A549 (cell line): ENCODE measurements at regions of chr20 and their contacts with region 1.

Region 1: GRCh38 chr20:1185790-1186334 is 1.1 kb upstream of the TMEM74B start:
- DNase-seq: peak; percentile 78 to 81
- ATAC-seq: peak; percentile 72 to 87
- H3K4me3 ChIP-seq: peak overlapping the region; percentile 94
- H3K27ac ChIP-seq: peak overlapping the region; percentile 76 to 90
- H3K4me1 ChIP-seq: peaks cover 16% of the 10 kb centered on the region
- CTCF ChIP-seq: peak; percentile 79
- EP300 ChIP-seq: no peak
- POLR2A ChIP-seq: no peak
- RAD21 ChIP-seq: peak; percentile 64 to 83

Region 2: GRCh38 chr20:1171461-1172093 is 14.3 kb before region 1 on chr20:
- CTCF ChIA-PET with region 1: interaction called, 91 read pairs
- POLR2A ChIA-PET with region 1: no interaction called
- DNase-seq: peak in 1 of 2 experiments; percentile 24
- ATAC-seq: peak in 1 of 2 experiments; percentile 25; a peak in 3 of 6 replicates
- H3K4me3 ChIP-seq: no peak overlapping the region
- H3K27ac ChIP-seq: no peak overlapping the region
- H3K4me1 ChIP-seq: no peaks in the 10 kb centered on the region
- CTCF ChIP-seq: no peak
- EP300 ChIP-seq: no peak
- POLR2A ChIP-seq: no peak
- RAD21 ChIP-seq: no peak

Region 3: DNA sequence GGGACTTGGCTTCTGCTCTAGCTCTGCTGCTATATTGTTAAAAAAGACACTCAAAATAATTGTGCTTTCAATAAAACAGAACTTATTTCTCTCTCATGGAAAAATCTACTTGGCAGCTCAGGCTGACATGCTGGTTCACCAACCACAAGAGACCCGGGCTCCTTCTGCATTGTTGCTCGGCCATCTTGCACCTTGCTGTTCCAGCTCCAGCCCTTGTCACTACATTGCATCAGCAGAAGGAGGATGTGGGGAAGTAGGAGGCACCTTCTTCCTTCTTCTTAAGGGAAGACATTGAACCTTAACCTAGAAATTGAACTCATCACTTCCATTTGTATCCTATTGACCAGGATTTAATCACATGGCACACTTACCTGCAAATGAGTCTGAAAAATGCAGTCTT is 10.8 kb after region 1 on chr20:
- CTCF ChIA-PET with region 1: interaction called, 11 read pairs
- POLR2A ChIA-PET with region 1: no interaction called
- DNase-seq: no peak
- ATAC-seq: no peak
- H3K4me3 ChIP-seq: no peak overlapping the region
- H3K27ac ChIP-seq: no peak overlapping the region
- H3K4me1 ChIP-seq: no peaks in the 10 kb centered on the region
- CTCF ChIP-seq: no peak
- EP300 ChIP-seq: no peak
- POLR2A ChIP-seq: no peak
- RAD21 ChIP-seq: no peak

Region 4: DNA sequence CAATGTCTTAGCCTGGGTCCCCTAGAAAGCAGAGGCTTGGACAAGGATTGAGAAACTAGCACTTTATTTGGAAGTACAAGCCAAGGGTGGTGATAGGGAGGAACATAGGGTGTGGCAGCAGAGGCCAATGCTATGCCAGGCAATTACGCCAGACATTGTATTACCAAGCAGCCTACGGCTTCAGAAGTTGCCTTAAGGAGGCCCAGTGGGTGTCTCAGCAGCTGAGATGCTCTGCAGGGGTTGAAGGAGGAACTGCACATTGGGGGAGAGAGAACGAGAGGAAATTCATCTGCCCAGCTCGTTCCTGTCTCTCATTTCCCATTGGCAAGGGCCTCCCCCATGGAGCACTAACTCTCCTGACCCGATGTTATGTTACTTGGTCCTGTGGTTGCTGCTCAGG is 18.3 kb after region 1 on chr20:
- CTCF ChIA-PET with region 1: interaction called, 21 read pairs
- POLR2A ChIA-PET with region 1: no interaction called
- DNase-seq: no peak
- ATAC-seq: no peak
- H3K4me3 ChIP-seq: no peak overlapping the region
- H3K27ac ChIP-seq: no peak overlapping the region
- H3K4me1 ChIP-seq: no peaks in the 10 kb centered on the region
- CTCF ChIP-seq: no peak
- EP300 ChIP-seq: no peak
- POLR2A ChIP-seq: no peak
- RAD21 ChIP-seq: no peak

Region 5: DNA sequence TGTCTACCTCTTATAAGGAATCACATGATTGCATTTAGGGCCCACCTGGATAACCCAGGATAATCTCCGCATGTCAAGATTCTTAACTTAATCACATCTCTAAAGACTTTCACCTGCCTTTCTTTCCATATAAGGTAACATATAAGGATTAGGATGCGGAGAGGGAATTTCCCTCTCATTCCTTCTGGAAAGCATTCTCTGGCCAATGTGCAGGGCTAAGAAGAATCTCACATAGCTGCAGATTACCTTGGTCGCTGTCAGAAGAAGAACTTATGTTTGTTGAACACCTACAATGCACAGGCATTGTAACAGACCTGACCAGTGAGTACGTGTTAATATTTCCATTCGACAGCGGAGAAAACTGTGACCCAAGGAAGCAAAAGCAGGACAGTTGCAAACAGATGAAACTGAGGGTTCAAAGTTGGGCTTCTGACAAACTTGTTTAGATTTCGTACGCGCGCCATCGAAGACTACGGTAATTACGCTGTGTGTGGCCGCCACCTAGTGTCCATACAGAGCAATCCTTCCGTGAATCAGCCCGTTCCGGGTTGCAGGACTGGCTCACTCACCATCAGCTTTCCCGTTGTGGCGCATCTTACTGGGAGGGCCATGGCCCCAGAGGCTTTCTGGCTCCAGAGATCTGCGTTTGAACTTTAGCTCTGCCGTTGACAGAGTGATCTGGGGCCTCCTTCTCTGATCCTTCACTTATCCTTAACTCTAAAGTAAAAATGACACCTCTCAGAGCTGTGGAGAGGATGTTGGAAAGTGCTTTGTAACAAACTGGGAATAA is 26.9 kb after region 1 on chr20:
- CTCF ChIA-PET with region 1: interaction called, 12 read pairs
- POLR2A ChIA-PET with region 1: no interaction called
- DNase-seq: peak; percentile 82 to 83
- ATAC-seq: peak; percentile 96 to 99
- H3K4me3 ChIP-seq: no peak overlapping the region
- H3K27ac ChIP-seq: no peak overlapping the region
- H3K4me1 ChIP-seq: no peaks in the 10 kb centered on the region
- CTCF ChIP-seq: peak; percentile 92
- EP300 ChIP-seq: no peak
- POLR2A ChIP-seq: no peak
- RAD21 ChIP-seq: peak; percentile 89 to 91